PC-3 (cell line): ENCODE measurements at regions of chr21 and their contacts with region 1.

Region 1: DNA sequence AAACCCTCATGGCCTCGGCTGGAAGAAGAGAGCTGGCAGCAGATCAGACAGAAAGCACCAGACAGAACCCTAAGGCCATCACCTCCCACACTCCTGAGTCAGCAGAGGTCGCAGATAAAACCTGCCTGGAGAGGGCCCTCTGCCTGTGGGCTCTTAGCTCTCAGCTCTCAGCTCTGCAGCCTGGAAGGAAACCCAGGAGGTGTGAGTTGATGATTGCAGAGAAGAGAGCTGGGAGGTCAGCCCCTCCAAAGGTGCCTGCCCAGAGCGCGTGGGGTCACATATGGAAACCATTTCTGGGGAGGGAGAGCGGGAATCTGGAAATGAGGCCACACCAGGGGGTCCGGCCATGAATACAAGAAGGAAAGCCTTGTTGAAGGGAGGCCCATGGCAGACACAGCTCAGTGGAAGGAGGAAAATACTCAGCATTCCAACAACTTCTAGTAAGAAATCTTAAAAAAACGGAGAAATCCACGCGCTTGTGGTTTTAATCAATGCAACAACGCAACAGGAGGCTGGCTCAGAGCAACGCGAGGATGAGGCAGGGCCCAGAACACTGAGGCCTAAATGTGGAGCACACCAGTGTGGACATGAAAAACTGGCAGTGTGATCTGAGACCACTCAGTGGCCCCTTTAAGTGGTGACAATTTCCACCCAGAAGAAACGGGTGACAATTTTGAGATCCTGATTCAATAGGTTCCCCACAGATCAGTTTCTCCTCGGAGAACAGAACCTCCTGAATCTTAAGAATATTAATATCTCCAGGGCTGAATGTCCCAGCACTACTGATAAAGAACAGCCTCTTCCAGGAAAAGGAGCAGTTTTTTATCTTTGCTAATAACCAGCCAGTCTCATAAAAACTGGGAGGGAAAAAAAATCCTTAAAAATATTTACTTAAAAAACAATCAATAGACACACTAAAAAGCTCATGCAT is 45.7 kb downstream of the PSMG1 start:
- DNase-seq: peak; percentile 35
- ATAC-seq: 0 out of 2 replicates have a peak, but pooled peaks have one; percentile 14
- H3K4me3 ChIP-seq: no peak overlapping the region
- H3K27ac ChIP-seq: peak overlapping the region; percentile 15; the same call in 1 of the 2 replicates
- H3K4me1 ChIP-seq: peaks cover 17% of the 10 kb centered on the region
- H3K27me3 ChIP-seq: no peaks in the 10 kb centered on the region
- CTCF ChIP-seq: no peak

Region 2: DNA sequence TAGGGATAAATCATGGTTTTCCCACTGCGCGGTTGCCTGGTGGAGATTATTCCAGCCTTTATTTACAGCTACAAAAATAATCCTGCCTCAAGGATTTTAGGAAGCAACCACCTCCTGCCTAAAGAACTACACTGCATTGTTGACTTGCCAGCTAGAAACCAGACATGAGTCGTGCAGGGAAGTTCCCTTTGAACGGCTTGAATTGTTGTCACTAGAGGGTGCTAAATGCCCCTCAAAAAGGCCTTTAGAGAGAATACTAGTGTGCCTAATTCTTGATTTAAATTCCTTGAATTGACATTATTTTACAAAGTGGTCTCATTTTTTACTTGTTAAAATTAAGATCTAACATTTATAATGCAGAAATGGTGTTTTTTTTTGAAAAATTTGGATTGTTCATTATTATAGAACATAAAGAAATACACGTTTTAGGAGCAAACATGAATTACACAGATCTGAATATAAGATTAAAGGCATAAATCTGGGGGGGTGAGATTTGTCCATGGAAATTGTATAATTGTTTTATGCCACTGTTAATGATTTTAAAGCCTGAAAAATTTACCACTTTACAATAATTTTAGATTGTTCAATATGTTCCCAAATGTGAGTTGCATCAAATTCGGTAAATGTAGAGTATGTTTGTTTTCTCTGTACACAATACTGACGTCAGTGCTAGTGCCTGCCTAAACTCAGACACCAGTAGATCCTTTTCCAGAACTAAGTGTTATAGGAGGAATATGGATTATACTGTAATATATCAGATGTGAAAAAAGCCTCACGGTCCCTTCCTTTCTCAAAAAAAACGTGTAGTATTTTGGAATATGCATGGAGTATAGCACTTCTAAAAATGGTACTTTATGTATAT is 631.6 kb before region 1 on chr21:
- CTCF ChIA-PET with region 1: interaction called, 3 read pairs
- POLR2A ChIA-PET with region 1: no interaction called
- intact Hi-C with region 1: loop called (anchors 1 kb)
- DNase-seq: peak; percentile 85
- ATAC-seq: peak; percentile 99
- H3K4me3 ChIP-seq: no peak overlapping the region
- H3K27ac ChIP-seq: no peak overlapping the region
- H3K4me1 ChIP-seq: no peaks in the 10 kb centered on the region
- H3K27me3 ChIP-seq: peaks cover 42% of the 10 kb centered on the region
- CTCF ChIP-seq: peak; percentile 83

Region 3: DNA sequence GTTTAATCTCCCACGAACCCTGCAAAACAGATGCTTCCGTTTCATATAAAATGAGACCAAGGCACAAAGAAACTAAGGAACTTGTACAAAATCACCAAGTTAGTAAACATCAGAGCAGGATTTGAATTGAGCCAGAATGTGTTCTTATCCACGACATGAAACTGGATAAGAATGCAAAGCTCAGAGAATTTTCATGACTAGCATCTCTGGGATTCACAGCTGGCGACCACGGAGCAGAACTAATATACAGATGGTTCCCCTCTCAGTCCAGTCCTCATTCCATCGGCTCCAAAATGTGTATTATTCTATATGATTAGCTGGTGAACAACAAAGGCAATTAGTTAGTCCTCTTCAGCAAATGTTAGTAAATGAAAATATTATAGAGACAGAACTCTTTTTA is 566.9 kb before region 1 on chr21:
- CTCF ChIA-PET with region 1: interaction called, 13 read pairs
- POLR2A ChIA-PET with region 1: no interaction called
- intact Hi-C with region 1: no loop called
- DNase-seq: no peak
- ATAC-seq: no peak
- H3K4me3 ChIP-seq: no peak overlapping the region
- H3K27ac ChIP-seq: no peak overlapping the region
- H3K4me1 ChIP-seq: no peaks in the 10 kb centered on the region
- H3K27me3 ChIP-seq: peaks cover 73% of the 10 kb centered on the region
- CTCF ChIP-seq: no peak

Region 4: GRCh38 chr21:38669176-38669575 is 468.3 kb before region 1 on chr21:
- CTCF ChIA-PET with region 1: interaction called, 4 read pairs
- POLR2A ChIA-PET with region 1: no interaction called
- intact Hi-C with region 1: loop called (anchors 1 kb)
- DNase-seq: peak; percentile 56
- ATAC-seq: peak; percentile 84
- H3K4me3 ChIP-seq: no peak overlapping the region
- H3K27ac ChIP-seq: no peak overlapping the region
- H3K4me1 ChIP-seq: no peaks in the 10 kb centered on the region
- H3K27me3 ChIP-seq: peaks cover 57% of the 10 kb centered on the region
- CTCF ChIP-seq: peak; percentile 75

Region 5: GRCh38 chr21:38712071-38712470 is 425.4 kb before region 1 on chr21:
- CTCF ChIA-PET with region 1: interaction called, 4 read pairs
- POLR2A ChIA-PET with region 1: no interaction called
- intact Hi-C with region 1: loop called (anchors 5 kb)
- DNase-seq: peak; percentile 72
- ATAC-seq: peak; percentile 97
- H3K4me3 ChIP-seq: no peak overlapping the region
- H3K27ac ChIP-seq: no peak overlapping the region
- H3K4me1 ChIP-seq: no peaks in the 10 kb centered on the region
- H3K27me3 ChIP-seq: peaks cover 12% of the 10 kb centered on the region; the same call in 1 of the 2 replicates
- CTCF ChIP-seq: peak; percentile 74

Region 6: DNA sequence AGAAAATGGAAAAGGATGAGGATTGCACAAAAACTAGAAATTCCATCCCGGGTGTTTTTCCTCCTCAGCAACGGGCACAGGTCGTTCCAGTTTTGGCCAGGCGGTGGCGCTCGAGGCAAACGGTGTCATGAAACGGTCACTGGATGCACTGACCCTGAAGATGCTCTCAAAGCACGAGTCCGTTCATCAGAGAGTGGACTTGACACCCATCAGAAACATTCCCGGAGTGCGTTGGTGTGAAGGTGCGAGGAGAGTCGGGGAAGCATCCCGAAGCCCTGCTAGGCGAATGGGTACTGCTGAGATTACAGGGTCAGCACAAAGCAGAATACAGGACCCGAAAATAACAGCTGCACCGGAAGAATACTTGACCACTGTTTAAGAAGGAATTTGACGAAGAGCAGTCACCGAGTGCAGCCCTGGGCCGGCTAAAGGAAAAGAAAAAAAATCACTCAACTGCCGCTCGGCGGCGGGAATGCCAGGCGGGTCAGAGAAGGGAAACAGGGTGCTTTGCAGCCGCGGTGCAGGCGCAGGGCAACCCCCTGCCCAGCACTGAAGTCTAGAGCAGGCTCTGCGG is 403.5 kb before region 1 on chr21:
- CTCF ChIA-PET with region 1: no interaction called
- POLR2A ChIA-PET with region 1: interaction called, 3 read pairs
- intact Hi-C with region 1: loop called (anchors 1 kb)
- DNase-seq: peak; percentile 84
- ATAC-seq: peak; percentile 90
- H3K4me3 ChIP-seq: no peak overlapping the region
- H3K27ac ChIP-seq: 0 out of 2 replicates have a peak overlapping the region, but pooled peaks have one; percentile 7
- H3K4me1 ChIP-seq: peaks cover 6% of the 10 kb centered on the region; the same call in 1 of the 2 replicates
- H3K27me3 ChIP-seq: no peaks in the 10 kb centered on the region
- CTCF ChIP-seq: peak; percentile 97